B cell (primary cell): ENCODE measurements at regions of chr2 and their contacts with region 1.

Region 1: GRCh38 chr2:119476301-119477021 is 44.8 kb downstream of the TMEM37 start:
- DNase-seq: peak; percentile 58
- ATAC-seq: peak; percentile 70
- H3K4me3 ChIP-seq: no peak overlapping the region
- H3K4me3 Mint-ChIP-seq: no peak overlapping the region
- H3K27ac ChIP-seq: no peak overlapping the region
- H3K27ac Mint-ChIP-seq: no peak overlapping the region
- H3K4me1 ChIP-seq: no peaks in the 10 kb centered on the region
- H3K4me1 Mint-ChIP-seq: no peaks in the 10 kb centered on the region
- H3K27me3 ChIP-seq: peaks cover 0 to 10% (median 2%) of the 10 kb centered on the region in 4 experiments
- H3K27me3 Mint-ChIP-seq: peaks cover 16% of the 10 kb centered on the region
- CTCF ChIP-seq: peak; percentile 92

Region 2: DNA sequence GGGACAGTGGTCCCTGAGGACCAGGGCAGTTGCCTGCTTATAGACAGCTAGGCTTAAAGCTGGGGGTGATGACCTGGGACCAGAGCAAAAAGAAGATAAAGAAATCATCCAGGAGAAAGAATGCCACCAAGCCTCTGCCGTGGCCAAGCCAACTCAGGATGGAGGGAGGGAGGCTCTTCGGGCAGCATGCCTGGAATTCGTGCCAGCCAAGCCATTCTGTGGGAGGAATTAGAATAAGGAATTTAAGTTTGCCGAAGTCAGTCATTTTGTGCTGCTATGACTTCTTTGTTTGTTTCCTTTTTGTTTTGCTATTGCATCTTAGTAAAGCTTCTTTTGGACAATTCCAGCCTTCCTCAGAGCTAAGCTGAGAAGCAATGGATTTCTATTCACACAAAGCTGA is 753.1 kb before region 1 on chr2:
- CTCF ChIA-PET with region 1: no interaction called
- POLR2A ChIA-PET with region 1: no interaction called
- intact Hi-C with region 1: no loop called
- DNase-seq: no peak
- ATAC-seq: no peak
- H3K4me3 ChIP-seq: no peak overlapping the region
- H3K4me3 Mint-ChIP-seq: no peak overlapping the region
- H3K27ac ChIP-seq: no peak overlapping the region
- H3K27ac Mint-ChIP-seq: no peak overlapping the region
- H3K4me1 ChIP-seq: no peaks in the 10 kb centered on the region
- H3K4me1 Mint-ChIP-seq: no peaks in the 10 kb centered on the region
- H3K27me3 ChIP-seq: no peaks in the 10 kb centered on the region
- H3K27me3 Mint-ChIP-seq: no peaks in the 10 kb centered on the region
- CTCF ChIP-seq: no peak

Region 3: GRCh38 chr2:119223521-119224390 is 252.7 kb before region 1 on chr2 and contains the start of gene STEAP3:
- CTCF ChIA-PET with region 1: interaction called, 3 read pairs
- POLR2A ChIA-PET with region 1: no interaction called
- intact Hi-C with region 1: loop called (anchors 5 kb)
- DNase-seq: peak; percentile 72
- ATAC-seq: peak; percentile 71
- H3K4me3 ChIP-seq: peak within 1 kb of the TSS in 4 of 5 experiments; percentile 43 to 70 (median 61)
- H3K4me3 Mint-ChIP-seq: peak within 1 kb of the TSS; percentile 77
- H3K27ac ChIP-seq: no peak within 1 kb of the TSS
- H3K27ac Mint-ChIP-seq: no peak within 1 kb of the TSS
- H3K4me1 ChIP-seq: peaks cover 6 to 13% of the 10 kb centered on the region in 2 donors
- H3K4me1 Mint-ChIP-seq: peaks cover 6% of the 10 kb centered on the region
- H3K27me3 ChIP-seq: peaks cover 0 to 30% (median 6%) of the 10 kb centered on the region in 4 experiments
- H3K27me3 Mint-ChIP-seq: peaks cover 33% of the 10 kb centered on the region
- CTCF ChIP-seq: no peak
- total RNA-seq, gene STEAP3: 1.1 TPM in 2 replicates

Region 4: DNA sequence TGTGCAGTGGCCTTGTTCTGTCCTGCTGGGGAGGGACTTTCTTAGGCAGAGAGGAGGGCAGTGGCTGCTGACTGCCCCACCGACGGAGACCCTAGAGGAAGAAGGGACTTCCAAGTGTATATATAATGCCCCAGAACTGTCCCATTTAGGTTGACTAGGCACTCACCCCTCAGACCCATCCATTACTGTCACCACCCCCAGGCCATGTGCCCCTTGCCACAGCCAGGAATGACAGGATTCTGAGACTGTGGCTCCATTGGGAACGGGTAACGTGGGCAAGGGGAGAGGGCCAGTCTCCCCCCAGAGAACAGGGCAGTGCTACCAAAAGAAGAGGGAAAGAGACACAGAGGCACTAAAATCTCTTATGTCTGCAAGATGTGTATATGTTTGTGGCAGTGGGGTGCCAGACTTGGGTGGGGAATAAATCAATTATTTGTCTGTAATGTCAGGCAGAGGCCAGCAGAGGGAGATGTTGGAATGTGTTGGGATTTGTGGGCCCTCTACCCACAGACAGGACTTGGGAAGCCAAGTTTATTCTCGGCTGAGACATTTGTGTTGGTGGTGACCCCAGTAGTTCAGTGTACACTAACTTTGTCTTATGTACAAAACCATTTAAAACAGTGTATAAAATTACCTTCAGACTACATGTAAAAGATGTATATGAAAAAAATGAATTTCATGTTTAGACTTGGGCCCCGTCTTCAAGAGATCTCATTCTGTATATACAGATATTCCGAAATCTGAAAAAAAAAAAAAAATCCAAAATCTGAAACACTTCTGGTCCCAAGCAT is 68.8 kb before region 1 on chr2:
- CTCF ChIA-PET with region 1: interaction called, 41 read pairs
- POLR2A ChIA-PET with region 1: no interaction called
- intact Hi-C with region 1: no loop called
- DNase-seq: peak; percentile 67
- ATAC-seq: peak; percentile 60
- H3K4me3 ChIP-seq: no peak overlapping the region
- H3K4me3 Mint-ChIP-seq: no peak overlapping the region
- H3K27ac ChIP-seq: no peak overlapping the region
- H3K27ac Mint-ChIP-seq: no peak overlapping the region
- H3K4me1 ChIP-seq: no peaks in the 10 kb centered on the region
- H3K4me1 Mint-ChIP-seq: no peaks in the 10 kb centered on the region
- H3K27me3 ChIP-seq: peaks cover 0 to 3% (median 0%) of the 10 kb centered on the region in 4 experiments
- H3K27me3 Mint-ChIP-seq: peaks cover 15% of the 10 kb centered on the region
- CTCF ChIP-seq: peak; percentile 81

Region 5: GRCh38 chr2:119487434-119488244 is 11.2 kb after region 1 on chr2:
- CTCF ChIA-PET with region 1: interaction called, 14 read pairs
- POLR2A ChIA-PET with region 1: no interaction called
- intact Hi-C with region 1: no loop called
- DNase-seq: no peak
- ATAC-seq: no peak
- H3K4me3 ChIP-seq: no peak overlapping the region
- H3K4me3 Mint-ChIP-seq: no peak overlapping the region
- H3K27ac ChIP-seq: no peak overlapping the region
- H3K27ac Mint-ChIP-seq: no peak overlapping the region
- H3K4me1 ChIP-seq: no peaks in the 10 kb centered on the region
- H3K4me1 Mint-ChIP-seq: no peaks in the 10 kb centered on the region
- H3K27me3 ChIP-seq: no peaks in the 10 kb centered on the region
- H3K27me3 Mint-ChIP-seq: peaks cover 20% of the 10 kb centered on the region
- CTCF ChIP-seq: no peak